ENCODE measurements at regions of chr7 and their contacts with region 1.

Region 1: DNA sequence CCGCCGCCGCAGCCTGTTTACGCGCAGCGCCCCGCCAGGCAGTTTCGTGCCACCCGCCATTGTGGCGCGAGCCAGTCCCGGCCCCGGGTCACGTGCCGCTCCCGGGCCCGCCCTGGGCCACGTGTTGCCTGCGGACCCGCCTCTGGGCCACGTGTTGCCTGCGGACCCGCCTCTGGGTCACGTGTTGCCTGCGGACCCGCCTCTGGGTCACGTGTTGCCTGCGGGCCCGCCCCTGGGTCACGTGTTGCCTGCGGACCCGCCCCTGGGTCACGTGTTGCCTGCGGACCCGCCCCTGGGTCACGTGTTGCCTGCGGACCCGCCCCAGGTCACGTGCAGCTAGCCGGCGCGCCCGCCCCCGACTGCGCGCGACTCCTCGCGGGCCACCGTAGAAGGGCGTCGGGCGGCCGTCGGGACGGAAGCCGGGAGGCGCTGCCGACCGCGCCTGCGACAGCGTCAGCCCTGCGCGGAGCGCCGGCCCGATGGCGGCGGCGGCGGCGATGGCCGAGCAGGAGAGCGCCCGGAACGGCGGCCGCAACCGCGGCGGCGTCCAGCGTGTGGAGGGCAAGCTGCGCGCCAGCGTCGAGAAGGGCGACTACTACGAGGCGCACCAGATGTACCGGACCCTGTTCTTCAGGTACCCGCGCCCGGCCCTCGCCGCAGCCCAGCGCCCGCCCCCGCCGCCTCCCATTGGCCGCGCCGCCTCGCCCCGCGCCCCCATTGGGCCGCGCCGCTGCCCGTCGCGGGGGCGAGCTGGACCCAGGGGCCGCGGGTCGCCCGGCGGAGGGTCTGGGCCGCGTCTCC is at the start of gene GET4:
- DNase-seq: peak; percentile 96
- ATAC-seq: peak; percentile 79
- H3K4me3 Mint-ChIP-seq: peak within 1 kb of the TSS; percentile 92
- H3K27ac Mint-ChIP-seq: peak within 1 kb of the TSS; percentile 87
- H3K4me1 Mint-ChIP-seq: peaks cover 27% of the 10 kb centered on the region
- H3K27me3 Mint-ChIP-seq: no peaks in the 10 kb centered on the region
- total RNA-seq, gene GET4: 17.7 to 29.7 TPM

Region 2: DNA sequence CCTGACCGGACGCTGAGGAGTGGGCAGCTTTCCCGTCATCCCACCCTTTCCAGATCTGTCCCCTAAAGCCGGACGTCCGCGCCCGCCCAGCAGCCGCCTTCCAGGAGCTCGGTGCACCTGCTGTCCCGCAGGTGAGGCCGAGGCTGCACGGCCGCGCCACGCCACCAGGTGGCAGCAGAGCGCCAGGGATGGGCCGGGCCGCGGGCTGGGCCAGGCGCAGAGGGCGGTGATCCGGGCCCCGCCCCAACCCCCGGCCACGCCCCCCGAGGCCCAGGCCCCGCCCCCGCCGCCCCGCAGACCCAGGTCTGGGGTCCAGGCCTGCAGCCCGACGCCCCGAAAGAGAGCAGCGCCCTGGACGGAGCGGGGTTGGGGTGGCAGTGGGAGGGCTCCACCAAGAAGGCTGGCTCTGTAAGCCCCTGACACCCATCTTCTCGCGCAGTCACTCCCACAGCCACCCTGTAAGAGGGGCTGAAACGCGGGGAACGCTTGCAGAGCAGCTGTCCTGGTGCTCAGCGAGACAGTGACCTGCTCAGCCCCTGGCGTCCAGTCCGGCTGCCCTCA is 554.2 kb before region 1 on chr7:
- CTCF ChIA-PET with region 1: interaction called, 6 read pairs
- POLR2A ChIA-PET with region 1: no interaction called
- intact Hi-C with region 1: loop called (anchors 1 to 2 kb)
- DNase-seq: peak; percentile 90
- ATAC-seq: peak; percentile 99
- H3K4me3 Mint-ChIP-seq: no peak overlapping the region
- H3K27ac Mint-ChIP-seq: no peak overlapping the region
- H3K4me1 Mint-ChIP-seq: no peaks in the 10 kb centered on the region
- H3K27me3 Mint-ChIP-seq: peaks cover 14% of the 10 kb centered on the region

Region 3: DNA sequence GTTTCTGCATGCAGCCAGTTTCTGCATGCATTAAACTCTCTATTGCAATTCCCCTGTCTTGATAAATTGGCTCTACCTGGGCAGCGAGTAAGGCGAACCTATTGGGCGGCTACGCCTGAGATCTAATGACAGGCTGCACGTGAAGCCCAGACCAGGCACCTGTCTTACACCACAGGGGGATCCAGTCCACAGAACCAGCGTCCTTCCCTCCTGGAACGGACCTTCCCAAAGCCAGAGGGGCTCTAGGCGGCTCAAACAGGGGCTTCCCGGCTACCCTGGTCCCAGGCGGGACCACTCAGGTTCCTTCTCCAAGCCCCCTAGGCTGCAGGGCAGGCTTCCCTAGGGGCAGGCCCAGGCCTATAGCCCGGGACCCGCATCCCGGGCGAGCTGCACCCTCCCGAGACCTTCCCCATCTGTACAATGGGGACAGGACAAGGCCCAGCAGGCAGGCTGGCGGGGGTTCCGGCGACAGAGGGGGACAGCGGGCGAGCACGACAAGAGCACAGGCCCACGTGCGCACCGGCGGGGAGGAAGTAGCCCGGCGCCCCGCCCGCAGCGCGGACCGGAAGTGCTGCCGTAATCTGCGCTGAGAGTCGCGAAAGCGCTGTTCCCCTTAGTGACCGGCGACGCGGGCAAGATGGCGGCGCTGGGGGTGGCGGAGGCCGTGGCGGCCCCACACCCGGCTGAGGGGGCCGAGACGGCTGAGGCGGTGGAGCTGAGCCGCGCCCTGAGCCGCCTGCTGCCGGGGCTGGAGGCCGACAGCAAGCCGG is 150.1 kb before region 1 on chr7 and contains the start of gene DNAAF5:
- CTCF ChIA-PET with region 1: no interaction called
- POLR2A ChIA-PET with region 1: no interaction called
- intact Hi-C with region 1: loop called (anchors 1 to 5 kb)
- DNase-seq: peak; percentile 93
- ATAC-seq: peak; percentile 89
- H3K4me3 Mint-ChIP-seq: peak within 1 kb of the TSS; percentile 83
- H3K27ac Mint-ChIP-seq: peak within 1 kb of the TSS; percentile 90
- H3K4me1 Mint-ChIP-seq: peaks cover 26% of the 10 kb centered on the region
- H3K27me3 Mint-ChIP-seq: no peaks in the 10 kb centered on the region
- total RNA-seq, gene DNAAF5: 31.5 to 37.2 TPM

Region 4: DNA sequence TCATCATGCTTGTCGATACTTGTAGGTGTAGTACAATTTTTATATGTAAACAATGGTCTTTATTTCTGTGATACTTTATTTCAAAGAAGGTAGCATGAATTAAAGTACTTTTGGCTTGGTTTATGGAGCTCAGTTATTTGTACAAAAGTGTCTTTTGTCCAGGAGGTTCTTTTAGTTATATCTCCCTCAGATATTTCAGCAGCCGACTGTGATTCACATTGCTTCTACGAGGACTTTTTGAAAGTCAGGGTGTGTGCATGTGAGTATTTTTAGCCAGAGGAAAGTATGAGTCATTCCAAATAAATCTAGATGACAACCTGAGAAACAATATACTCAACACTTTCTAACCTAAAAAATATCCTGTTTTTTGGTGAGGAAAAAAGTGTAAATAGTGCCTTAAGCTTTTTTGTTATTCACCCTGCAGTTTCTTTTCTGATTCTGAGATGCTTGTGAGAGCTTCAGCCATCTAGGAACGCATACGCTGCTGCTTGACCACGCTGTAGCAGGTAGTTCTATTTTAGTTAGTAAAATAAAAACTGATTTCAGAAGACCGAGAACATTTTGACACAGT is 44.7 kb before region 1 on chr7:
- CTCF ChIA-PET with region 1: interaction called, 15 read pairs
- POLR2A ChIA-PET with region 1: interaction called, 3 read pairs
- intact Hi-C with region 1: loop called (anchors 1 kb)
- DNase-seq: no peak
- ATAC-seq: peak; percentile 69
- H3K4me3 Mint-ChIP-seq: peak overlapping the region; percentile 63
- H3K27ac Mint-ChIP-seq: peak overlapping the region; percentile 98
- H3K4me1 Mint-ChIP-seq: peaks cover 64% of the 10 kb centered on the region
- H3K27me3 Mint-ChIP-seq: no peaks in the 10 kb centered on the region

Region 5: GRCh38 chr7:954330-955238 is 78.2 kb after region 1 on chr7 and contains the start of gene ADAP1:
- CTCF ChIA-PET with region 1: no interaction called
- POLR2A ChIA-PET with region 1: no interaction called
- intact Hi-C with region 1: loop called in 1 of 2 experiments (anchors 1 kb)
- DNase-seq: peak; percentile 76
- ATAC-seq: peak; percentile 85
- H3K4me3 Mint-ChIP-seq: peak within 1 kb of the TSS; percentile 63
- H3K27ac Mint-ChIP-seq: no peak within 1 kb of the TSS
- H3K4me1 Mint-ChIP-seq: no peaks in the 10 kb centered on the region
- H3K27me3 Mint-ChIP-seq: peaks cover 8% of the 10 kb centered on the region
- total RNA-seq, gene ADAP1: 13.1 to 14.8 TPM

Region 6: GRCh38 chr7:1044191-1045068 is 168.1 kb after region 1 on chr7 and contains the start of gene GPR146:
- CTCF ChIA-PET with region 1: no interaction called
- POLR2A ChIA-PET with region 1: no interaction called
- intact Hi-C with region 1: loop called in 1 of 2 experiments (anchors 5 kb)
- DNase-seq: peak; percentile 96
- ATAC-seq: peak; percentile 88
- H3K4me3 Mint-ChIP-seq: peak within 1 kb of the TSS; percentile 78
- H3K27ac Mint-ChIP-seq: peak within 1 kb of the TSS; percentile 73
- H3K4me1 Mint-ChIP-seq: peaks cover 61% of the 10 kb centered on the region
- H3K27me3 Mint-ChIP-seq: no peaks in the 10 kb centered on the region
- total RNA-seq, gene GPR146: 4.7 to 5.6 TPM

Region 7: GRCh38 chr7:1459522-1459892 is 583.1 kb after region 1 on chr7:
- CTCF ChIA-PET with region 1: interaction called, 4 read pairs
- POLR2A ChIA-PET with region 1: no interaction called
- intact Hi-C with region 1: loop called in 1 of 2 experiments (anchors 5 kb)
- DNase-seq: peak; percentile 100
- ATAC-seq: peak; percentile 98
- H3K4me3 Mint-ChIP-seq: peak overlapping the region; percentile 59
- H3K27ac Mint-ChIP-seq: no peak overlapping the region
- H3K4me1 Mint-ChIP-seq: peaks cover 7% of the 10 kb centered on the region
- H3K27me3 Mint-ChIP-seq: no peaks in the 10 kb centered on the region

Measured in activated CD4-positive, alpha-beta T cell treated with anti-CD3 and anti-CD28 coated beads for 36 hours (primary cell).